ENCODE measurements at regions of chr18 and their contacts with region 1.

Region 1: GRCh38 chr18:64149916-64150438 is 1.1 kb upstream of the LINC00305 start:
- DNase-seq: no peak
- ATAC-seq: no peak
- H3K4me3 ChIP-seq: no peak overlapping the region
- H3K27ac ChIP-seq: no peak overlapping the region
- H3K4me1 ChIP-seq: no peaks in the 10 kb centered on the region
- H3K27me3 ChIP-seq: no peaks in the 10 kb centered on the region
- CTCF ChIP-seq: no peak
- POLR2A ChIP-seq: no peak
- RAD21 ChIP-seq: no peak

Region 2: GRCh38 chr18:64097497-64097896 is 52.5 kb before region 1 on chr18:
- CTCF ChIA-PET with region 1: no interaction called
- POLR2A ChIA-PET with region 1: no interaction called
- RAD21 ChIA-PET with region 1: no interaction called
- intact Hi-C with region 1: loop called (anchors 10 kb)
- DNase-seq: no peak
- ATAC-seq: no peak
- H3K4me3 ChIP-seq: no peak overlapping the region
- H3K27ac ChIP-seq: no peak overlapping the region
- H3K4me1 ChIP-seq: no peaks in the 10 kb centered on the region
- H3K27me3 ChIP-seq: no peaks in the 10 kb centered on the region
- CTCF ChIP-seq: no peak; a peak in 1 of 6 replicates
- POLR2A ChIP-seq: no peak
- RAD21 ChIP-seq: 0 out of 2 replicates have a peak, but pooled peaks have one; percentile 5

Region 3: GRCh38 chr18:64219517-64219916 is 69.5 kb after region 1 on chr18:
- CTCF ChIA-PET with region 1: no interaction called
- POLR2A ChIA-PET with region 1: no interaction called
- RAD21 ChIA-PET with region 1: no interaction called
- intact Hi-C with region 1: loop called (anchors 10 kb)
- DNase-seq: no peak
- ATAC-seq: no peak
- H3K4me3 ChIP-seq: no peak overlapping the region
- H3K27ac ChIP-seq: no peak overlapping the region
- H3K4me1 ChIP-seq: no peaks in the 10 kb centered on the region
- H3K27me3 ChIP-seq: no peaks in the 10 kb centered on the region
- CTCF ChIP-seq: no peak
- POLR2A ChIP-seq: no peak
- RAD21 ChIP-seq: no peak

Measured in HCT116 (cell line).